ENCODE measurements at regions of chr16 and their contacts with region 1.

Region 1: GRCh38 chr16:68085259-68086071 is at the start of gene NFATC3:
- DNase-seq: peak; percentile 95
- H3K4me3 ChIP-seq: peak within 1 kb of the TSS; percentile 67 to 97 (median 89)
- H3K27ac ChIP-seq: peak within 1 kb of the TSS; percentile 94
- H3K4me1 ChIP-seq: peaks cover 22% of the 10 kb centered on the region
- H3K27me3 ChIP-seq: no peaks in the 10 kb centered on the region
- CTCF ChIP-seq: no peak
- POLR2A ChIP-seq: no peak
- total RNA-seq, gene NFATC3: 30.5 and 33.1 TPM in 2 replicates

Region 2: GRCh38 chr16:67767953-67768352 is 317.5 kb before region 1 on chr16:
- CTCF ChIA-PET with region 1: no interaction called
- POLR2A ChIA-PET with region 1: no interaction called
- dilution Hi-C with region 1: no loop called
- intact Hi-C with region 1: no loop called
- DNase-seq: no peak
- H3K4me3 ChIP-seq: no peak overlapping the region
- H3K27ac ChIP-seq: no peak overlapping the region
- H3K4me1 ChIP-seq: peaks cover 42% of the 10 kb centered on the region
- H3K27me3 ChIP-seq: no peaks in the 10 kb centered on the region
- CTCF ChIP-seq: no peak
- POLR2A ChIP-seq: no peak

Region 3: DNA sequence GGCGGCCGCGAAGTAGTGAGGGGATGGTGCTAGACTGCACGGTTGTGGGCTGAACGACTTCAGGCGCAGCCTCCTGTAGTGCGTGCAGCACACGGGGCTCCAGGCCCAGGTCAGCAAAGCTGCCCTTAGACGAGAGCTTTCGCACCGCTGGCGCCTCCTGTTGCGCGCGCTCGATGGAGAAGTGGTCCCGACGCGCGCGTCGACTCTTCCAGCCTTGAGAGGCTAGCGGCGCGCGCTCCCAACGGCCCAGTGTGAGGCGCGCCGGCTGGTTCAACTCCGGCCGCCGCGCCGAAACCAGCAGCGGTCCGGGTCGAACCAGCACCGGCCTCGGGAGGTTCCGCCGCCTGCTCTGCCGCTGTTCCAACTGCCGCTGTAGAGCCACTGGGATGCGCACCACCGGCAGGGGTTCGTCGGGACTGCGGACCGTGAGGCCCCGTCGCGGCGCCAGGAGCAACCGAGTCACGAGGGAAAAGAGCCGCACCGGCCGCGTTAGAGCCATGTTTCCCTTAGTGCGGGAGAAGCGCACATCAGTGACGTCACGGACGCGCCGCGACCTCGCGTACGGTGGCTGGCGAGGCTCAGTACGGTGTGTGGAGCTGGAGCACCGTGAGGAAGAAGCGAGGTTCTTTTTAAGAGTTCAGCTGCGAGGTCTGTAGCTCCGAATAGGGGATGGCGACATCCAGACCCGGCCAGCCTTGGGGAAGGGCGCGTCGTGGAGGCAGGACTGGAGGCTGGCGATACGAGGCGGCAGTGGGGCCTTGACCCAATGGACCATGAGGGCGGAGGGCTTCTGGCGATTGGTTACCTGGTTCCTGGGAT is 62.6 kb before region 1 on chr16 and contains the starts of genes DDX28 and DUS2:
- CTCF ChIA-PET with region 1: no interaction called
- POLR2A ChIA-PET with region 1: interaction called, 3 read pairs
- dilution Hi-C with region 1: no loop called
- intact Hi-C with region 1: loop called (anchors 2 kb)
- DNase-seq: peak; percentile 95
- H3K4me3 ChIP-seq: peak within 1 kb of the TSS; percentile 84 to 94 (median 92)
- H3K27ac ChIP-seq: peak within 1 kb of the TSS; percentile 56
- H3K4me1 ChIP-seq: peaks cover 14% of the 10 kb centered on the region
- H3K27me3 ChIP-seq: no peaks in the 10 kb centered on the region
- CTCF ChIP-seq: no peak
- POLR2A ChIP-seq: peak; percentile 82
- total RNA-seq, gene DDX28: 7.9 and 8.4 TPM in 2 replicates
- total RNA-seq, gene DUS2: 20.3 and 21.7 TPM in 2 replicates

Region 4: DNA sequence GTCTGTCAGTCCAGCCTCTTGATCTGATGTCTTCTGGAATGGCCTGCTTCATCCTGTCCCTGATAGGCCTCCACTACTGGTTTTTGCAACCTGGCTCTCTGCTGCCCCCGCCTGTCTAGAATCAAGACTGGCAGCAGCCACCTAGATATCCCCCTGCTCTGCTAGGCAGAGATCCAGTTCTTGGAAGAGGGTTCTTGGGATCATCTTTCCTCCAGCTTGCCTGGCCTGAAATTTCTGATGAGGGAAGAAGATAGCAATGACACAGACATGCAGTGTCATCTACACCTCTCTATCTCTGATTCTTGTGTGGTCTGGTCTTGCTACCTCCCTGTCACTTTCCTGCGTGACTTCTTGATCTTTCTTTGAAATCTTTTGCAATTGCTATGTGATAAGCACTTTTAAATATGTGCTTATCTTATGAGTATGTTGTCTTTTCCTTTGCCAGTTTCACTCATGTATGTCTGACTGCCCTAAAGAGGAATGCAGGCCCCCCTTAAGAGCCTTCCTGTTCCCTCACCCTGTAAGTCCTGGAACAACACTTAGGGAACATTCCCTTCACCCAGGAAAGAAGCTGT is 20.6 kb before region 1 on chr16:
- CTCF ChIA-PET with region 1: interaction called, 34 read pairs
- POLR2A ChIA-PET with region 1: interaction called, 4 read pairs
- dilution Hi-C with region 1: no loop called
- intact Hi-C with region 1: no loop called
- DNase-seq: peak; percentile 77
- H3K4me3 ChIP-seq: no peak overlapping the region
- H3K27ac ChIP-seq: no peak overlapping the region
- H3K4me1 ChIP-seq: peaks cover 19% of the 10 kb centered on the region
- H3K27me3 ChIP-seq: no peaks in the 10 kb centered on the region
- CTCF ChIP-seq: peak; percentile 80 to 83
- POLR2A ChIP-seq: no peak

Region 5: GRCh38 chr16:68074850-68075555 is 10.5 kb before region 1 on chr16:
- CTCF ChIA-PET with region 1: interaction called, 12 read pairs
- POLR2A ChIA-PET with region 1: no interaction called
- dilution Hi-C with region 1: no loop called
- intact Hi-C with region 1: no loop called
- DNase-seq: no peak
- H3K4me3 ChIP-seq: no peak overlapping the region
- H3K27ac ChIP-seq: no peak overlapping the region
- H3K4me1 ChIP-seq: peaks cover 13% of the 10 kb centered on the region
- H3K27me3 ChIP-seq: no peaks in the 10 kb centered on the region
- CTCF ChIP-seq: no peak
- POLR2A ChIP-seq: no peak

Region 6: GRCh38 chr16:68128577-68129305 is 43.3 kb after region 1 on chr16:
- CTCF ChIA-PET with region 1: interaction called, 3 read pairs
- POLR2A ChIA-PET with region 1: interaction called, 5 read pairs
- dilution Hi-C with region 1: no loop called
- intact Hi-C with region 1: loop called (anchors 5 kb)
- DNase-seq: peak; percentile 31
- H3K4me3 ChIP-seq: no peak overlapping the region
- H3K27ac ChIP-seq: no peak overlapping the region
- H3K4me1 ChIP-seq: peaks cover 16% of the 10 kb centered on the region
- H3K27me3 ChIP-seq: no peaks in the 10 kb centered on the region
- CTCF ChIP-seq: no peak
- POLR2A ChIP-seq: no peak

Measured in endothelial cell of umbilical vein (primary cell).